IMR-90 (cell line): ENCODE measurements at regions of chr6 and their contacts with region 1.

Region 1: GRCh38 chr6:70221025-70221714 is 81.7 kb downstream of the COL9A1 start:
- DNase-seq: peak; percentile 20
- ATAC-seq: peak; percentile 87
- H3K4me3 ChIP-seq: no peak overlapping the region
- H3K27ac ChIP-seq: no peak overlapping the region
- H3K4me1 ChIP-seq: no peaks in the 10 kb centered on the region
- H3K27me3 ChIP-seq: peaks cover 6% of the 10 kb centered on the region
- CTCF ChIP-seq: peak; percentile 62
- POLR2A ChIP-seq: no peak
- RAD21 ChIP-seq: peak; percentile 72

Region 2: GRCh38 chr6:69631552-69632346 is 589.4 kb before region 1 on chr6:
- CTCF ChIA-PET with region 1: no interaction called
- POLR2A ChIA-PET with region 1: no interaction called
- dilution Hi-C with region 1: no loop called
- in situ Hi-C with region 1: no loop called
- intact Hi-C with region 1: no loop called
- DNase-seq: no peak
- ATAC-seq: no peak
- H3K4me3 ChIP-seq: no peak overlapping the region
- H3K27ac ChIP-seq: no peak overlapping the region
- H3K4me1 ChIP-seq: no peaks in the 10 kb centered on the region
- H3K27me3 ChIP-seq: no peaks in the 10 kb centered on the region
- CTCF ChIP-seq: no peak
- POLR2A ChIP-seq: no peak
- RAD21 ChIP-seq: no peak

Region 3: DNA sequence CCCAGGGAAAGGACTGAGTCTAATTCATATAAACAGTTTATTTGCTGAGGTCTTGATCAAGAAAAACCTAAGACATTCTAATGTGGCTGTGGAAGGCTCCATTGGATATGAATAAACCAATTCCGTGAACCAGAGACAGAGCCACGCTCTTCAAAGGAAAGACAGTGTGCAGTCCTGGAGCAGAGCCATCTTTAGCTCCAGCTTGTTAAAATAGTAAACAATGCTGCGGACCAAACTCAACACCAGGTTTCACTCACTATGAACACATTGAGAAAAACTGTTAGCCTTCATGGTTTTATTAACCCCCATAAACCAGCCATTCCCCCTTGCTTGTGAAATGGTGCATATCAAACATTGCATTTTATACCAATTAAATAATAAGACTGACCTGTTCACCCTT is 19.9 kb after region 1 on chr6:
- CTCF ChIA-PET with region 1: interaction called, 10 read pairs
- POLR2A ChIA-PET with region 1: no interaction called
- dilution Hi-C with region 1: no loop called
- in situ Hi-C with region 1: no loop called
- intact Hi-C with region 1: no loop called
- DNase-seq: no peak
- ATAC-seq: no peak
- H3K4me3 ChIP-seq: no peak overlapping the region
- H3K27ac ChIP-seq: no peak overlapping the region
- H3K4me1 ChIP-seq: no peaks in the 10 kb centered on the region
- H3K27me3 ChIP-seq: no peaks in the 10 kb centered on the region
- CTCF ChIP-seq: no peak
- POLR2A ChIP-seq: no peak
- RAD21 ChIP-seq: no peak

Region 4: GRCh38 chr6:70304616-70305015 is 83.4 kb after region 1 on chr6:
- CTCF ChIA-PET with region 1: interaction called, 10 read pairs
- POLR2A ChIA-PET with region 1: no interaction called
- dilution Hi-C with region 1: no loop called
- in situ Hi-C with region 1: no loop called
- intact Hi-C with region 1: loop called (anchors 2 kb)
- DNase-seq: no peak
- ATAC-seq: no peak
- H3K4me3 ChIP-seq: no peak overlapping the region
- H3K27ac ChIP-seq: no peak overlapping the region
- H3K4me1 ChIP-seq: no peaks in the 10 kb centered on the region
- H3K27me3 ChIP-seq: peaks cover 25% of the 10 kb centered on the region
- CTCF ChIP-seq: no peak
- POLR2A ChIP-seq: no peak
- RAD21 ChIP-seq: no peak

Region 5: DNA sequence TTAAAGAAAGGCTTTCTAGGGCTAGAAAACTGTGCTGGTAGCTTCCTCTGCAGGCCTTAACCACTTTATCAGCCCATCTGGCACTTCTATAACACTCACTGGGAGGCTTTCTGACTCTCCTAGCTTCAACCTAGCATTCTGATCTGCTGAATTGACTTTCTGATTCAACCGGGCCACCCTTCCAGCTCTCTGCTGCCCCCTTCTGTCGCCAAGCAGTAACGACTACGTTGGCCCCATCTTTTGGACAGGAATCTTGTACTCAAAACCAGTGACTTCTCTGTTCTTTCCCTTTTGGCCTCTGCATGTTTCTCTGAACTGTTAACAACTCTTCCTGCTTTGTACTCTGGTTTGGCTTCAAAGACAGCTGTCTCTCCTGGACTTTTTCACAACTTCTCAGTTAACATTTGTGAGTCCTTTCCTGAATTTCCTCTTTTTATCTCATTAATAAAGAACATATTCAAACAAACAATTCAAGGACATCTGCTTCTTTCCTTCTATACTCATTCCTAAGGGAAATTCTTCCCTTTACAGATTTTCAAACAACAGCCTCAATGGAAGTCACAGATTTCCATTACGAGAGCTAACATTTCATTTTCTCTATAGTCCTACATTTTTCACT is 148.3 kb after region 1 on chr6:
- CTCF ChIA-PET with region 1: interaction called, 34 read pairs
- POLR2A ChIA-PET with region 1: no interaction called
- dilution Hi-C with region 1: no loop called
- in situ Hi-C with region 1: loop called (anchors 5 kb)
- intact Hi-C with region 1: loop called (anchors 1 kb)
- DNase-seq: peak; percentile 68
- ATAC-seq: peak; percentile 98
- H3K4me3 ChIP-seq: no peak overlapping the region
- H3K27ac ChIP-seq: no peak overlapping the region
- H3K4me1 ChIP-seq: no peaks in the 10 kb centered on the region
- H3K27me3 ChIP-seq: peaks cover 25% of the 10 kb centered on the region
- CTCF ChIP-seq: peak; percentile 91
- POLR2A ChIP-seq: no peak
- RAD21 ChIP-seq: peak; percentile 62

Region 6: DNA sequence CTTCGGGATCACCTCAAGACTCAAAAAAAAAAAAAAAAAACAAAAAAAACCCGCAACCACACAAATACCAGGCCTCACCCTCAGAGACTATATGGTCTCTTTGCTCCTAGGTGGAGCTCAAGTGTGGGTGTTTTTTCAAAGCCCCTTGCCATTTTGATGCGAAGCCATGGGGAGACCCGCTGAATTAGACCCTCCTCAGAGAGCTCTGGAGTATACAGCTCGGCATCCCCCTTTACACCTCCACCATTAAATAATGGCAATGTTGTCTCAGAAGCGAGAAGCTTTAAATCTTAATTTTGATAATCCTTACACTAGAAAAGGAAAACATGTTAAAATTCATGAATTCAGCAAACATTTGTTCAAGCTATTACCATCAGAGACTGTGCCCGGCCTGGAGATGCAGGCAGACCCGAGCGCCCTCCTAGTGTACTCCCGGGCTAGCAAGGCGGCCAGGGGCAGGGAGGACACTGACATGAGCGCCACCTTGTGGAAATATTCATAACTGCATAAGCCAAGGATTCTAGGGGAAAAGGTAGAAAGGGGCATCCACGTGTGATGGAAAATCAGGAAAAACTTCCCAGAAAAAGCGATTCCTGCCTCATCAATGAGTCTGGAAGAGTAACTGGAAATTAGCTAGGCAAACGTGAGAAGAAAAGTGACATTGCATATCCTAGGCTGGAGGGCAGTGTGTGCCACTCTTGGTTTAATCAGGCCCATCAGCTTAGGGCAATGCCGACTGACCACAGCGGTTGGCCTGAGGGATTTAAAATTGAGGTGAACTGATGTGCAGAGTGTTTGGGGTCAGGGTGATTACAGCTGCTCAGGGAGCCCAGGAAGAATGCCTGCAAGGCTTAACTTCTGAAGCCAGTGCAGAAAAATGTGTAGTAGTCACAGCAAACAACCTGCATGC is 663.2 kb after region 1 on chr6:
- CTCF ChIA-PET with region 1: no interaction called
- POLR2A ChIA-PET with region 1: no interaction called
- dilution Hi-C with region 1: no loop called
- in situ Hi-C with region 1: no loop called
- intact Hi-C with region 1: loop called (anchors 2 kb)
- DNase-seq: peak; percentile 33
- ATAC-seq: peak; percentile 97
- H3K4me3 ChIP-seq: no peak overlapping the region
- H3K27ac ChIP-seq: no peak overlapping the region
- H3K4me1 ChIP-seq: no peaks in the 10 kb centered on the region
- H3K27me3 ChIP-seq: peaks cover 12% of the 10 kb centered on the region
- CTCF ChIP-seq: peak; percentile 88
- POLR2A ChIP-seq: 0 out of 2 replicates have a peak, but pooled peaks have one; percentile 22
- RAD21 ChIP-seq: peak; percentile 91

Region 7: DNA sequence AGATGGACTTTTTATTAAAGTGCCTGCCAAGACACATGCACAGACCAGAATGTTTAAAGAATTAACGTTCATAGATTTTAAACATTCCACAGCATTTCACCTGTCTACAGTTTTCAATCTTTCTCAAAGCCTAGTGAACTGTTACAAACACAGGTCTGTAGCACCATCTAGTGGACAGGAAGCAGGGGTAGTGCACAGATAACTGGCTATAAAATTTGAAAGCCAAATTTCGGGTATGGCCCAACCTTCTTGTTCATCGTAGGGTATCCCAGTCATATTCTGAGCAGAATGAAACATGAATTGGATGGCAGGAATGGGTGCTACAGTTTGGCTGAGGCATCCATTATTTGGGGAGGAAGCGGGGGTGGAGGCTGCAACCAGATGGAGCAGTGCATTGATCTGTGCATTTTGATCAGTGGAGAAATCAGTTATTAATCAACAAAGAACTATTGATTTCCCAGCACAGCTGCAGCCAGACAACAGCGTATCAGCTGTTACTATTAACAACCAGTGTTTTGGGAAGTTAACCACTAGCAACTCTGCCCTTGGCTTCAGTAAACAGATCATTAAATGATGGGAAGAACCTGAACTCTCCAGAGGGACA is 791.8 kb after region 1 on chr6:
- CTCF ChIA-PET with region 1: no interaction called
- POLR2A ChIA-PET with region 1: no interaction called
- dilution Hi-C with region 1: no loop called
- in situ Hi-C with region 1: no loop called
- intact Hi-C with region 1: loop called (anchors 5 kb)
- DNase-seq: peak; percentile 51
- ATAC-seq: peak; percentile 80
- H3K4me3 ChIP-seq: no peak overlapping the region
- H3K27ac ChIP-seq: no peak overlapping the region
- H3K4me1 ChIP-seq: no peaks in the 10 kb centered on the region
- H3K27me3 ChIP-seq: peaks cover 6% of the 10 kb centered on the region
- CTCF ChIP-seq: peak; percentile 75
- POLR2A ChIP-seq: no peak
- RAD21 ChIP-seq: peak; percentile 71